ENCODE measurements at regions of chr19 and their contacts with region 1.

Region 1: GRCh38 chr19:34145741-34146202 is 26.5 kb upstream of the LSM14A start:
- DNase-seq: no peak
- H3K4me3 ChIP-seq: no peak overlapping the region
- H3K27me3 ChIP-seq: peaks cover 1% of the 10 kb centered on the region; the same call in 1 of the 2 replicates
- CTCF ChIP-seq: peak; percentile 80

Region 2: DNA sequence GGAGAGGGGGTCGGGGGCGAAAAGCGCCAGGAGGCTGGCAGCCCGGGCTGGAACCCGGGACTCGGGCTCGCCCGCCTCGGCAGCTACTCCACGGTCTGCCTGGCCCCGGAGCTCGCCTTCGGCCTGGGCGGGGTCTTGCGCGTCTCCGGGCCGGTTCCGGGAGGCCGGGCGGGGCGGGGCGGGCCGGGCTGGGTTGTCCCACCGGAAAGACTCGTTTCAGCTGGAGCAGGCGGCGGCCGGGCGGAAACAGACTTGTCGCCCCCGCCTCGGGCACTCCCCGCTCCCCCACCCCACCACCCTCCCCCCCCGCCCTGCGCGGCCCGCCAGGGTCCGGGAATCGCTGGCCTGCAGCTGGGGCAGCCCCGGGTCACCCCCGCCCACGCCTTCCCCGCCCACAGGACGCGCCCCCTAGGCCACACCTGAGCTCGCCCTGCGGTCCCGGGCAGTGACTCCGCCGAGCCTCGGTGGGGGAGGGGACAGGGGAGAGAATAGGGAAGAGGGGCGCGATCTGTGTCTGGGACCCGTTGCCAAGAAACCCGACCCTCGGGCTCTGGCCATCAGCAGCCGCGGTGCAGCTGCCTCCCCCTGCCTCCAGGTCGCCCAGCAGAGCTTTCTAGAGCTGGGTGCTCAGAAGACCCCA is 239.7 kb before region 1 on chr19:
- CTCF ChIA-PET with region 1: no interaction called
- POLR2A ChIA-PET with region 1: no interaction called
- DNase-seq: no peak
- H3K4me3 ChIP-seq: peak overlapping the region; percentile 43
- H3K27me3 ChIP-seq: peaks cover 12% of the 10 kb centered on the region
- CTCF ChIP-seq: no peak

Region 3: GRCh38 chr19:34082289-34083077 is 63.3 kb before region 1 on chr19:
- CTCF ChIA-PET with region 1: no interaction called
- POLR2A ChIA-PET with region 1: no interaction called
- DNase-seq: no peak
- H3K4me3 ChIP-seq: no peak overlapping the region
- H3K27me3 ChIP-seq: no peaks in the 10 kb centered on the region
- CTCF ChIP-seq: no peak

Region 4: GRCh38 chr19:34120846-34121639 is 24.7 kb before region 1 on chr19:
- CTCF ChIA-PET with region 1: interaction called, 73 read pairs
- POLR2A ChIA-PET with region 1: no interaction called
- DNase-seq: no peak
- H3K4me3 ChIP-seq: no peak overlapping the region
- H3K27me3 ChIP-seq: peaks cover 7% of the 10 kb centered on the region
- CTCF ChIP-seq: peak; percentile 88

Region 5: DNA sequence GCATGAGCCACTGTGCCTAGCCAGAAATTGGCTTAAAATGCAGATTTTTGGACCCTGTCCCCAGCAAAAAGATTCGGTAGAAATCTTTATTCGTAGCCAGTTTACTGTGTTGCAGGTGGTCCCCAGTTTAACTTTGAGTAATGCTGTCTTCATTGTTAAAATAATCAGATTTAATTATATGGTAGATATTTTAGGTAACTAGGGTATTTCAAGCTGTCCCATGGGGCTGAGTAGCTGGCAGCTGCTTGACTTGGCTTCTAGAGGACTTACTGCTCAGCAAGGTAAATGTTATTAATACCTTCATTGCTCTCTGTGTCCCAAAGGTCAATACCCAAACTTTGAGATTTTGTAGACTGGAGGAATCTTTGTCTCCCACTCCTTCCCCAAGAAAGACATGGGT is 47.7 kb after region 1 on chr19:
- CTCF ChIA-PET with region 1: no interaction called
- POLR2A ChIA-PET with region 1: no interaction called
- DNase-seq: no peak
- H3K4me3 ChIP-seq: no peak overlapping the region
- H3K27me3 ChIP-seq: no peaks in the 10 kb centered on the region
- CTCF ChIP-seq: no peak